Activated CD4-positive, alpha-beta T cell treated with anti-CD3 and anti-CD28 coated beads, Interleukin-2, amount 10 ng/mL, durations not matched to agents 7 days and 5 days (primary cell): ENCODE measurements at regions of chr12 and their contacts with region 1.

Region 1: GRCh38 chr12:47742253-47742825 is 16.3 kb downstream of the RAPGEF3 start:
- DNase-seq: peak; percentile 80
- H3K4me3 Mint-ChIP-seq: no peak overlapping the region
- H3K27ac Mint-ChIP-seq: no peak overlapping the region
- H3K4me1 Mint-ChIP-seq: peaks cover 17% of the 10 kb centered on the region
- H3K27me3 Mint-ChIP-seq: peaks cover 8% of the 10 kb centered on the region

Region 2: DNA sequence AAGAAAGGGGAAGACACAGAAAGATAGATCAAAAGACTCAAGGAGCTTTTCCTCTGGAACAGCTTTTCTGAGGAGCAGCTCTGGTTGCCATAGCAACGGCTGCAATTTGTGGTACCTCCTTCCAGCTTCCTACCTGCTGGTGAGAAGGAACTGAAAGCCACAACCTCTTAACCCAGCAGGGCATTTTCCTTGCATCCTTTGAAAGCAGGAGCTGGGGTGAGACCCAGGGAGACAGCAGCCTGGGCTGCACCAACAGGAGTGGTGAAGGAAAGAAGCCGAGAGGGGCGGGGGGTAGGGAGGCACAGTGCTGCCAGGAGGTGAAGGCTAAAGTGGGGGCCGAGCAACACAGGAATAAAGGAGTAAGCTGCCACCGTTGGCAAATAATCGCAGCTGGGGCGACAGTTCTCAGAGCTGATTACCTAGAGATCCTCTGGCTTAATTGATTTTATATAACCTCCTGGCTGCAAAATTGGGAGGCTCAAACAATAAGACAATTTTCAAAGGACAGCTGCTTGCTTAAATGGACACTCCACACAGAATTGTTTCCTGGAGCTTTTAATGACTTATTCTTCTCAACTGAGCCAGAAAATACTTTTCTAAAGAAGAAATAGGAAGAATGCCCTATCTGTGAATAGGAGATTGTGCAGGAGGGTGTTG is 165.9 kb before region 1 on chr12:
- CTCF ChIA-PET with region 1: no interaction called
- POLR2A ChIA-PET with region 1: no interaction called
- DNase-seq: no peak
- H3K4me3 Mint-ChIP-seq: no peak overlapping the region
- H3K27ac Mint-ChIP-seq: no peak overlapping the region
- H3K4me1 Mint-ChIP-seq: peaks cover 14% of the 10 kb centered on the region
- H3K27me3 Mint-ChIP-seq: no peaks in the 10 kb centered on the region

Region 3: DNA sequence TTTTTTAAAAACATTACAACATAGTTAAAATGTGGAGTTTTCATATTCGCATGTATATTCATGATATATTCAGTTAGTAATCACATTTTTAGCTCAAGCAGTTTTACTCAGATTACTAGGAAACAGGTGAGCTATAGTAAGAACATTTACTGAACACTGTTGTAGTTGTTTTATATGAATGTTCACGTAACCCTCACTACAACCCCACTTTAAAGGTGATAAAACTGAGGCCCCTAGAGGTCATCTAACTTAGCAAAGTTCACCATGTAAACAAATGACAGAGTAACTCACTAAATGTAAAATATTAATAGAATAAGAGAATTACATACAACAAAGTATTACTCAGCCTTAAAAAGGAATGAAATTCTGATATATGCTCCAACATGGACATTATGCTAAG is 62.6 kb before region 1 on chr12:
- CTCF ChIA-PET with region 1: no interaction called
- POLR2A ChIA-PET with region 1: no interaction called
- DNase-seq: no peak
- H3K4me3 Mint-ChIP-seq: no peak overlapping the region
- H3K27ac Mint-ChIP-seq: no peak overlapping the region
- H3K4me1 Mint-ChIP-seq: peaks cover 13% of the 10 kb centered on the region
- H3K27me3 Mint-ChIP-seq: no peaks in the 10 kb centered on the region

Region 4: GRCh38 chr12:47715393-47715876 is 26.9 kb before region 1 on chr12:
- CTCF ChIA-PET with region 1: interaction called, 36 read pairs
- POLR2A ChIA-PET with region 1: no interaction called
- DNase-seq: peak; percentile 87
- H3K4me3 Mint-ChIP-seq: no peak overlapping the region
- H3K27ac Mint-ChIP-seq: peak overlapping the region; percentile 63
- H3K4me1 Mint-ChIP-seq: peaks cover 31% of the 10 kb centered on the region
- H3K27me3 Mint-ChIP-seq: no peaks in the 10 kb centered on the region

Region 5: GRCh38 chr12:47753034-47754001 is 11.0 kb after region 1 on chr12:
- CTCF ChIA-PET with region 1: interaction called, 162 read pairs
- POLR2A ChIA-PET with region 1: no interaction called
- DNase-seq: no peak
- H3K4me3 Mint-ChIP-seq: no peak overlapping the region
- H3K27ac Mint-ChIP-seq: no peak overlapping the region
- H3K4me1 Mint-ChIP-seq: peaks cover 20% of the 10 kb centered on the region
- H3K27me3 Mint-ChIP-seq: no peaks in the 10 kb centered on the region

Region 6: GRCh38 chr12:47767216-47767724 is 24.9 kb after region 1 on chr12:
- CTCF ChIA-PET with region 1: interaction called, 162 read pairs
- POLR2A ChIA-PET with region 1: no interaction called
- DNase-seq: peak; percentile 81
- H3K4me3 Mint-ChIP-seq: no peak overlapping the region
- H3K27ac Mint-ChIP-seq: no peak overlapping the region
- H3K4me1 Mint-ChIP-seq: peaks cover 15% of the 10 kb centered on the region
- H3K27me3 Mint-ChIP-seq: peaks cover 13% of the 10 kb centered on the region

Region 7: DNA sequence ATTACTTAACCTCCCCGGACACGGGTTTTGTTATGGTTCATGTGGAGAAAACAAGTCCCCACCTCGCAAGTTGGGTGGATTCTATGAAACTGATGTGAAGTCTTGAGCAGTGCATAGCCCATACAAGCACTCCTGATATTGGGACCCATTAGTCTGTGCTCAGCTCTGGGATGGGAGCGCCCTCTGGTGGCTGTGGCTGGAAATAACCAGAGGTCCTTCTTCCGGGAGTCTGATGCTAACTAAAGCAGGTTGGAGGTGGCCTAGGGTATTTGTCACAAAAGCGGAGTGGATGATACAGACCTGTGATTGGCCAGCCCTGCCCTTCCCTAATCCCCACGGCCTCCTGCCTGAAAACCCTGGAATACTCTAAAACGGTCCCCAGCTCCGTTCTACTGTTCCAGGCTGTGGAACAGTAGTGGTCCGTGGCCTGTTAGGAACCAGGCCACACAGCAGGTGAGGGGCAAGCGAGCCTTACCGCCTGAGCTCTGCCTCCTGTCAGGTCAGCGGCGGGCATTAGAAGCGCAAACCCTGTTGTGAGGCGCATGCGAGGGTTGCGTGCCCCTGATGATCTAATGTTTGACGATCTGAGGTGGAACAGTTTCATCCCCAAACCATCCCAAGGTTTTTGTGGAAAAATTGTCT is 37.1 kb after region 1 on chr12:
- CTCF ChIA-PET with region 1: interaction called, 23 read pairs
- POLR2A ChIA-PET with region 1: no interaction called
- DNase-seq: peak; percentile 94
- H3K4me3 Mint-ChIP-seq: no peak overlapping the region
- H3K27ac Mint-ChIP-seq: peak overlapping the region; percentile 57
- H3K4me1 Mint-ChIP-seq: peaks cover 38% of the 10 kb centered on the region
- H3K27me3 Mint-ChIP-seq: no peaks in the 10 kb centered on the region

Region 8: DNA sequence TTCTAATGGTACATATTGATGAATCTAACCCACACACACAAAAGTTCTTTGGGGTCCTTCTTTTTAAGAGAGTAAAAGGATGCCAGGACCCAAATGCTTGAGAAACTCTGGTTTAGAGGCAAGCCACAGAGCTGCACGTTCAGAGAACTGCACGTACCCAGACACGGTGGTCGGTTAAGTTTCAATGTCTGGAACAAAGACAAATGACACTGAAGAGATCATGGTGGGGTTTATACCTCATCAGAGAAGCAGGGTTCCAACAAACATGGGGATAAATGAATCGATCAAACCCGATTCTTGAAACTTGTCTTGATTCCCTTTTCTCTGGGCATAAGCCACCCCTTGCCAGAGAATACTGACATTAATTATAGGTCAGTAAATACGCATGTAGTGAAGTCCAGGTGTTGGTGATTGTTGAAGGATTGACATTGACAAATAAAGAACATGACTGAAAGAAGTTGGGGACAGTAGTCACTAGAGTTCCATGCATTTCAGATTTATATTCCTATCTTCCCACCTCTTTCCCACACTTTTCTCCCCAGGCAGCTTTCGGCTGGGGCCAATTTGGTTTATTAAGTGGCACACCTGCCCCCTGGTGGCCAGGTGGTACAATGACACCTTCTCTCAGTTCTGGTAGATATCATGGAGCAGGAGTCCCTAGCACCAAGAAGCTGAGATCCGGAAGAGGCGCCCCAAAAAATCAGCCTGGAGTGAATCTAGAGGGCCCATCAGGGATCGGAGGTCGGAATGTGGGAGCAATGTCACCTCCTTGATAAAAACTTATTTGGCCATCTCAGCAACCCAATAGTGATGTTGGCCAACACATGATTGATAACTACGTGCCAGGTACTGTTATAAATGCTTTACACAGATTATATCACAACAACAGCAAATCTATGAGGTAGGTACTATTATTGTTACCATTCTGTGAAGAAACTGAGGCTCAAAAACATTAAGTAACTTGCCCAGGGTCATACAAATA is 95.1 kb after region 1 on chr12:
- CTCF ChIA-PET with region 1: interaction called, 45 read pairs
- POLR2A ChIA-PET with region 1: interaction called, 4 read pairs
- DNase-seq: peak; percentile 70
- H3K4me3 Mint-ChIP-seq: no peak overlapping the region
- H3K27ac Mint-ChIP-seq: peak overlapping the region; percentile 11
- H3K4me1 Mint-ChIP-seq: peaks cover 57% of the 10 kb centered on the region
- H3K27me3 Mint-ChIP-seq: no peaks in the 10 kb centered on the region